CD14-positive monocyte (primary cell): ENCODE measurements at regions of chr12 and their contacts with region 1.

Region 1: DNA sequence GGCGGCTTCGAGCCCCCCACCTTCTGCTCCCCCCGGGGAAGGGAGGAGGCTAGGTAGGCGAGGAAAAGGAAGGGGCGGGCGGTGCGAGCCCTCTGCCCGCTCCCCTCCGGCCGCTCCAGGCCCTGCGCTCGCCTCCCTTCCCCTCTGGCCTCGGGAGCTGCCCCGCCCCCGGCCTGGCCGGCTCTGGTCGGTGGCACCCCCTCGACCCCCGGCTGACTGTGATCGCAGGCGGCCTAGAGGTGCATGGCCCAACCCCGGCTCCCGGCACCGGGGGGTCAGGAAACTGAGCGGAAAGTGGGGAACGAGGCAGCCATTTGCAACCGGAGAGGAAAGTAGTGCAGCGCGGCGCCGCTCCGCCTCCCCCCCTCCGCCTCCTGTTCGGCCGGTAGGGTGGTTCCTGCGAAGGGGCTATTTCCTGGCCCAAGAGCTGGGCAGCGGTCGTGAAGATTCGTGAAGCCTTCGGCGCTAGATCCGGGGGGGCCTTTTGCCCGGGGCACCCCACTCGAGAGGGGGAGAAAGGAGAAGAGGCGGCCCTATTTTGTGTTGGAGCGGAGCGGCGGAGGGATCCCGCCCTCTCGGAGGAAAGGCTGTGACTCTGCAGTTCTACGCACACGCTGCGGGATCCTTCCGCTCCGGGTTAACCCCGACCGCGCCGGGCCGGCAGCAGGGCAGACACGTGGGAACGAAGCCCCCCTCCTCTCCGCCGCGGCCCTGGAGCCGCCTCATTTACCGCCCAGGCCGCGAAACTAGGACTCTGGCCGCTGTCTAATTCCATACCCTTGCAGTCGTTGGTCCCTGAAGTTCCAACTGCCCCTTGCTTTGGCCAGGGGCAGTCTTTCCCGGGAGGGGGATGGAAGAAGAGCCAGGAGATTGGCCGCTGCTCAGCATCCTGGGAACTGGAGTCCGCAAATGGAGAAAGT is at the start of gene KMT2D:
- DNase-seq: peak; percentile 84 to 92 (median 87)
- H3K4me3 ChIP-seq: peak within 1 kb of the TSS; percentile 75 to 97 (median 92)
- H3K4me3 Mint-ChIP-seq: peak within 1 kb of the TSS; percentile 96 to 97
- H3K27ac ChIP-seq: peak within 1 kb of the TSS; percentile 68 to 92
- H3K27ac Mint-ChIP-seq: peak within 1 kb of the TSS; percentile 96 to 99 (median 97)
- H3K4me1 ChIP-seq: peaks cover 43 to 47% of the 10 kb centered on the region in 2 donors
- H3K4me1 Mint-ChIP-seq: peaks cover 51% of the 10 kb centered on the region
- H3K27me3 ChIP-seq: no peaks in the 10 kb centered on the region
- H3K27me3 Mint-ChIP-seq: no peaks in the 10 kb centered on the region
- CTCF ChIP-seq: peak; percentile 14
- polyA plus RNA-seq, gene KMT2D: 1.2 to 66.9 (median 2.7) TPM

Region 2: DNA sequence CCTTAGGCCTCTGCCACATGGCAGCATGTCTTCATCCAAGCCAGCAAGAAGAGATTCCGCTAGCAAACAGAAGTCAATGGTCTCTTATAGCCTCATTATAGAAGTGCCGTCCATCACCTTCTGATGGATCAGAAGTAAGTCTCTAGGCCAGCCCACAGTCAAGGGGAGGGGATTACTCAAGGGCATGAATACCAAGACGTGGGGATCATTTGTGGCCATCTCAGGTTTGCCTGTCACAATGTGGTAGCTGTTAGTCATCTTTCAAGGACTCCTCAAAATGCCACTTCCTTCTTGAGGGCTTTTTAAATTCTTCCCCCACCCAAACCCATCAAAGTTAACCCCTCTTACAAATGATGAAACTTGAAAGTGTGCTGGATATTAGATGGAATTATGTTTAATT is 263.5 kb before region 1 on chr12:
- intact Hi-C with region 1: no loop called
- DNase-seq: peak in 1 of 3 donors; percentile 19
- H3K4me3 ChIP-seq: no peak overlapping the region
- H3K4me3 Mint-ChIP-seq: no peak overlapping the region
- H3K27ac ChIP-seq: no peak overlapping the region
- H3K27ac Mint-ChIP-seq: no peak overlapping the region
- H3K4me1 ChIP-seq: peaks cover 7 to 8% of the 10 kb centered on the region in 2 donors
- H3K4me1 Mint-ChIP-seq: peaks cover 7% of the 10 kb centered on the region
- H3K27me3 ChIP-seq: no peaks in the 10 kb centered on the region
- H3K27me3 Mint-ChIP-seq: peaks cover 5 to 10% (median 7%) of the 10 kb centered on the region in 3 donors
- CTCF ChIP-seq: no peak

Region 3: DNA sequence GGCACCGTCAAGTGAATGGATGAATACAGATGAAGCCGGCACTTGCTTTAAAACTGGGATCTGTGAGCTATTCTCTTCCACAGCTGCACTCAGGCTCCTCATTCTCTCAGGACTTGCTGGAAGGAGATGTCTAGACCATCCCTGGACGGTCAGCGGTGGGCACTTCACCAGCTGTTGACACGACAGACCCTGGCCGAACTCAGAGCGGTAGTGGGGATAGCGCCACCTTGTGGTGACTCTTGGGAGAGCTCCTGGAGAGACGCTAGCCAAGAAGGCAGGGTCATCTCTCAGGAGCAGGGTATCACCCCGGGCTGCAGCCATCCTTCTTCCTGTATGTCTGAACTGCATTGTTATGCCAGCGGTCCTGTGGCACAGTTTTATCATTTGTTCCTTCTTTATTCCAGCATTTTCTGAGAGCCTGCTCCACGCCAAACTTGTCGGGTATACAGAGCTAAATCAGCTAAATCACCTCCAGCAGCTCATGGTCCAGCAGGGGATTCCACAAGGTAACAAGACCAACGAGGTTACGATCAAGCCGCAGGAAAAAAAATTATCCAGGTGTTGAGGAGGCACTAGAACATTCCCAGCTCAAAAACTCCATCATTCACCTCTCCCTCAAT is 72.4 kb before region 1 on chr12:
- intact Hi-C with region 1: no loop called
- DNase-seq: peak in 2 of 3 donors; percentile 69 to 70
- H3K4me3 ChIP-seq: no peak overlapping the region
- H3K4me3 Mint-ChIP-seq: peak overlapping the region in 1 of 2 donors; percentile 64
- H3K27ac ChIP-seq: no peak overlapping the region
- H3K27ac Mint-ChIP-seq: peak overlapping the region in 1 of 7 donors; percentile 49
- H3K4me1 ChIP-seq: no peaks in the 10 kb centered on the region
- H3K4me1 Mint-ChIP-seq: peaks cover 4% of the 10 kb centered on the region
- H3K27me3 ChIP-seq: peaks cover 39 to 78% of the 10 kb centered on the region in 2 donors
- H3K27me3 Mint-ChIP-seq: peaks cover 66 to 92% (median 79%) of the 10 kb centered on the region in 3 donors
- CTCF ChIP-seq: peak; percentile 97

Region 4: DNA sequence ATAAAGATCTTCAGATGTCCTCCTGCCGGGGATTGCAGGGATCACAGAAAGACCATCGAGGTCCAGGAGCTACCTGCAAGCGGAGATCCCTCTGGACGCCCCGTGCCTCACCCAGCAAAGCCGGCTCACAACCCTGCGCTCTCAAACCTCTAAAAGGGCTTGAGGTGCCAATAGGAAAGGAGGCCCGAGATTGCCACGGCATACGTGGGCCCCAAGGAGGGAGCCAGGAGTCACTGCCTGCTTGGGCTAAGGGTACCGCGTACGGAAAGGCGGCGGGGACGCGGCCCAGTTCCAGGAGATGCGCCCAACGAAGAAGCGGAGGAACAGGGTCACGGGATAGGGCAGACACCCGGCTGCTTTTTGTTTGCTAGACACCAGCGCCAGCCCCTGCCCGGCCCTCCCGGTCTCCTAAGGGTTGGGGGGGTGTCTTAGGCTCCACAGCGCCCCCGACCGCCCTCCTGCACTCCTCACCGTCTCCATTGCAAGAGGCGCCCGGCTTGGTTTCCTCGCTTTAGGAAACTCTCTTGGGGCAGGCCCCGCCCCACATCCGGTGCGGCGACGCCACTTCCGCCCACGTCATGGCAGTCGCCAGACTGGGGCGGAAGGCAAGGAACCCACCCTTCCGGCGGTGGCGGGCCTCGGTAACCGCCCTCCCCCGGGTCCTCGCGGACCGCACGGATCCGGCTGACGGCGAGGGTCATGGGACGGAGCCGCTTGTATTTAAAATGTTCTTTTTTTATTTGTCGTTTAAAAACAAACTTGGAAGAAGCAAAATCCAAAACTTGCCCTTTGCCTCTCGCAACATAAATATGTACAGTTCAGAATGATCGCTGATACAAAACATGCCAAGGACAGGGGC is 42.0 kb before region 1 on chr12 and contains the start of gene PRKAG1:
- intact Hi-C with region 1: loop called (anchors 5 kb)
- DNase-seq: peak; percentile 97 to 99 (median 97)
- H3K4me3 ChIP-seq: peak within 1 kb of the TSS; percentile 68 to 96 (median 94)
- H3K4me3 Mint-ChIP-seq: peak within 1 kb of the TSS; percentile 89 to 96
- H3K27ac ChIP-seq: peak within 1 kb of the TSS; percentile 94 to 100
- H3K27ac Mint-ChIP-seq: peak within 1 kb of the TSS; percentile 98 to 100 (median 99)
- H3K4me1 ChIP-seq: peaks cover 25 to 28% of the 10 kb centered on the region in 2 donors
- H3K4me1 Mint-ChIP-seq: peaks cover 29% of the 10 kb centered on the region
- H3K27me3 ChIP-seq: no peaks in the 10 kb centered on the region
- H3K27me3 Mint-ChIP-seq: peaks cover 0 to 4% (median 0%) of the 10 kb centered on the region in 3 donors
- CTCF ChIP-seq: peak; percentile 60
- polyA plus RNA-seq, gene PRKAG1: 35.9 to 58.9 (median 50.1) TPM

Region 5: GRCh38 chr12:49098035-49098451 is 37.5 kb after region 1 on chr12:
- intact Hi-C with region 1: loop called in 1 of 2 experiments (anchors 5 kb)
- DNase-seq: peak in 2 of 3 donors; percentile 48 to 51
- H3K4me3 ChIP-seq: no peak overlapping the region
- H3K4me3 Mint-ChIP-seq: no peak overlapping the region
- H3K27ac ChIP-seq: no peak overlapping the region
- H3K27ac Mint-ChIP-seq: no peak overlapping the region
- H3K4me1 ChIP-seq: peaks cover 6 to 14% of the 10 kb centered on the region in 2 donors
- H3K4me1 Mint-ChIP-seq: peaks cover 14% of the 10 kb centered on the region
- H3K27me3 ChIP-seq: peaks cover 29% of the 10 kb centered on the region in 2 donors
- H3K27me3 Mint-ChIP-seq: peaks cover 32 to 36% (median 33%) of the 10 kb centered on the region in 3 donors
- CTCF ChIP-seq: peak; percentile 95

Region 6: GRCh38 chr12:49130151-49131050 is 69.9 kb after region 1 on chr12:
- intact Hi-C with region 1: loop called in 1 of 2 experiments (anchors 5 kb)
- DNase-seq: peak; percentile 94 to 96 (median 96)
- H3K4me3 ChIP-seq: peak overlapping the region; percentile 84 to 99 (median 98)
- H3K4me3 Mint-ChIP-seq: peak overlapping the region; percentile 94 to 97
- H3K27ac ChIP-seq: peak overlapping the region; percentile 94 to 97
- H3K27ac Mint-ChIP-seq: peak overlapping the region; percentile 94 to 96 (median 96)
- H3K4me1 ChIP-seq: peaks cover 27 to 43% of the 10 kb centered on the region in 2 donors
- H3K4me1 Mint-ChIP-seq: peaks cover 38% of the 10 kb centered on the region
- H3K27me3 ChIP-seq: no peaks in the 10 kb centered on the region
- H3K27me3 Mint-ChIP-seq: no peaks in the 10 kb centered on the region
- CTCF ChIP-seq: peak; percentile 98